ENCODE measurements at regions of chr16 and their contacts with region 1.

Region 1: DNA sequence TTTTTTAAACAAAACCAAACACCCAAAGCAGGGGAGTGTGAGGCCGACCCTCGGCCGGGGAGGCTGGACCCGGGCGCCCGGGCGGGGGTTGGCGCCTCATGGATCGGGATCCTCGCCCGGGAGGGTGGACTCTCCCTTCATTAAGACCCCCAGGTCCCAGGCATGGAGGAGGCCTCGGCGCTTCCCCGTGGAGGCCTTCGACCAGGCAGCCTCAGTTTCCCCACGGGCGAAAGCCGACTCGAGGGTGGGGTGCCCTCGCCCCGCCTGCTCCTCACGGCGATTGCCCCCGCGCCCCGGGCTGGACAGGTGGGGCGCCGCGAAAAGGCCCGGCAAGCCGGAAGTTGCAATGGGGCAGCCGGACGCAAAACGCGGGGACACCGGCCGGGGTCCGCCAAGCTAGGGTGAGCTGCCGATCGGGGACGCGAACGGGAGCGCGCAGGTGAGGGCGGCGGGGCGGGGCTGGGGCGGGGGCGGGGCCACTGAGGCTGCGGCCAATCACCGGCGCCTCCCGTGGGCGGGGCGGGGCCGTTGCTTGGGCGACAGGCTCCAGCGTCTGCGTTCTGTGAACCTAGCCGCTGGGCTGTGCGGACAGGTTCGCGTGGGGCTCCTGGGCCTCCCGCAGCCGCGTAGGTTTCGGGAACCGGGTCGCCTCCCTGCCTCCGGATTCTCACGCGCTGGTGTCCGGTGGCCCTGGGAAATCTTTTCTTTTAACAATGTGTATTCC is 6.0 kb upstream of the ZNF205 start:
- DNase-seq: peak; percentile 84
- H3K4me3 ChIP-seq: peak overlapping the region; percentile 73 to 96 (median 90)
- H3K27ac ChIP-seq: peak overlapping the region; percentile 49
- H3K4me1 ChIP-seq: peaks cover 3% of the 10 kb centered on the region
- H3K27me3 ChIP-seq: no peaks in the 10 kb centered on the region
- CTCF ChIP-seq: no peak

Region 2: GRCh38 chr16:2952679-2953078 is 153.7 kb before region 1 on chr16:
- CTCF ChIA-PET with region 1: no interaction called
- dilution Hi-C with region 1: no loop called
- in situ Hi-C with region 1: no loop called
- intact Hi-C with region 1: no loop called
- DNase-seq: no peak
- H3K4me3 ChIP-seq: no peak overlapping the region
- H3K27ac ChIP-seq: no peak overlapping the region
- H3K4me1 ChIP-seq: peaks cover 5% of the 10 kb centered on the region
- H3K27me3 ChIP-seq: no peaks in the 10 kb centered on the region
- CTCF ChIP-seq: no peak

Region 3: DNA sequence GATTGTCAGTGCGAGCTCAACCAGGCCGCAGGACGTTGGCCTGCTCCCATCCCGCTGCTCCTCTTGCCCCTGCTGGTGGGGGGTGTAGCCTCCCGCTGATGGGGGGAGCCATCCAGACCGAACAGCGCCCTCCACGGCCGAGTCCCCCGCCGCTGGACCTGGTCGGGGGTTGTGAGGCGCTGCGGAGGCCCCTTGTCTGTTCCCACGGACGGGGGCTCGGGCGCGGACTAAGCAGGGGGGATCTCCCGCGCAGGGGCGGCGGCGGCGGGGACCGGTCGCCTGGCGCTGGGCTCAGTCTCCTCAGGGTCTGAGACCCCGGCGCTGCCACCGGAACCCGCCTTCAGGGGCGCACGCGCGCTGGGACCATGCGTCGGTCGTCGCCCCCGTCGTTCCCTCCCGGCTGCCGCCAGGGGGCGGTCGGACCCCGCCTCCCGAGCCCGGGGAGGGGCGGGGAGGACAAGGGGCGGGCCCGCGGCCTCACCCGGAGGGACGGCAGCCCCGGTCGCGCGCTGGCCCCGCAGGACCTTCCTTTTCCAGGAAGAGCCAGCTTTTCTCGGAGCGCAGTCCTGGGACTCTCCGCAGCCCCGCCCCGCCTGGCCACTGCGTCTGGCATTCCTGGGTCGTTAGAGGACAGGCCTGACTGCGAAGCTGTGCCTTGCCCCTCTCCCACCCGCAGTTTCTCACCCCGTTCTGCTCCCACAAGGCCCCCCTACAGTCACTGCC is 47.2 kb before region 1 on chr16:
- CTCF ChIA-PET with region 1: no interaction called
- dilution Hi-C with region 1: no loop called
- in situ Hi-C with region 1: no loop called
- intact Hi-C with region 1: no loop called
- DNase-seq: peak; percentile 78
- H3K4me3 ChIP-seq: peak overlapping the region; percentile 74 to 99 (median 82)
- H3K27ac ChIP-seq: peak overlapping the region; percentile 29
- H3K4me1 ChIP-seq: peaks cover 13% of the 10 kb centered on the region
- H3K27me3 ChIP-seq: no peaks in the 10 kb centered on the region
- CTCF ChIP-seq: peak; percentile 48 to 71

Region 4: DNA sequence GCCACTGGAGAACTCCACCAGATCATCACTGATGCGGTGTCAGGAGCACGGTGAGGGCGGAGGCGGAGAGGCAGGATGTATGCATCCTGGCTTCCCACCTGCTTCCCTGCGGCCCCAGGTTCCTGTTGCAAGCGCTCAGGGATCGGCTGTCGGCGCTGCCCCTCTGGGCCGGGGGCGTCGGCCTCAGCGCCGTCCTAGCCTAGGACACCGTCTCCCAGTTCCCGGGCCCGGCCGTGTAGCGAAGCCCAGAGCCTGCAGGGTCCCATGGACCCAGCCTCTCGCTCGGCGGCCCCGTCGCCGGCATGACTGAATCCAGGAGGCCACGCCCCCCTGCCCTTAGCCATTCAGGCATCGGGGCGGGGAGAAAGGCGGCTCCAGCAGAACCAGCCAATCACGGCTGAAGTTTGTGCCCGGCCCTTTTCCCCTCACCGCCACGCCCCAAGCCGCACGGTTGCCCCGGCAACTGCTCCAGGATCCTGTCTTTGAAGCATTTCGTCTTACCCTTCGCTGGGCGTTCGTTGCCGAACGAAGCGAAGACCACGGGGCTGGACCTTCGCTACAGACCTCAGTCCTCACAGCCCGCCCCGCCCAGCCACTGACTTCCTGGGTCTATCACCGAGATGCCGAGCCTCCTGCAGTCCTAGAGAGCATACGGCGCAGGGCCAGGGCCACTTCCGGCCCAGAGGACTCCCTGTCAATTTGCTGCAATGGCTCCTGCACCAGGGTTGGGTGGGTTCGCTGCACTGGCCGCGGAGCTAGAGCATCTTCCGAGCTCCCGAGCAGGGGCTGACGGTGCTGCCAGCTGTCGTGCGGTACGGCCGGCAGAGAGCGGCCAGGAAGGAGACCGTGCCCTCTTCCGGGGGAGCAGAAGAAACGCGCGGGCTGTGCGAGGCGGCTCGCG is 17.9 kb after region 1 on chr16:
- CTCF ChIA-PET with region 1: no interaction called
- dilution Hi-C with region 1: no loop called
- in situ Hi-C with region 1: no loop called
- intact Hi-C with region 1: loop called (anchors 2 kb)
- DNase-seq: peak; percentile 93
- H3K4me3 ChIP-seq: peak overlapping the region; percentile 62 to 78 (median 68)
- H3K27ac ChIP-seq: peak overlapping the region; percentile 4
- H3K4me1 ChIP-seq: peaks cover 21% of the 10 kb centered on the region
- H3K27me3 ChIP-seq: no peaks in the 10 kb centered on the region
- CTCF ChIP-seq: peak in 1 of 2 donors; percentile 37

Region 5: GRCh38 chr16:3182608-3183444 is 76.5 kb after region 1 on chr16:
- CTCF ChIA-PET with region 1: interaction called, 19 read pairs
- dilution Hi-C with region 1: no loop called
- in situ Hi-C with region 1: no loop called
- intact Hi-C with region 1: no loop called
- DNase-seq: peak; percentile 77
- H3K4me3 ChIP-seq: peak overlapping the region; percentile 63 to 75 (median 65)
- H3K27ac ChIP-seq: peak overlapping the region; percentile 18
- H3K4me1 ChIP-seq: no peaks in the 10 kb centered on the region
- H3K27me3 ChIP-seq: no peaks in the 10 kb centered on the region
- CTCF ChIP-seq: peak; percentile 45 to 64

Measured in mammary epithelial cell (primary cell).